Activated naive CD4-positive, alpha-beta T cell treated with anti-CD3 and anti-CD28 coated beads, Interleukin-2, amount 10 ng/mL, durations not matched to agents 7 days and 5 days (primary cell): ENCODE measurements at regions of chr9 and their contacts with region 1.

Region 1: DNA sequence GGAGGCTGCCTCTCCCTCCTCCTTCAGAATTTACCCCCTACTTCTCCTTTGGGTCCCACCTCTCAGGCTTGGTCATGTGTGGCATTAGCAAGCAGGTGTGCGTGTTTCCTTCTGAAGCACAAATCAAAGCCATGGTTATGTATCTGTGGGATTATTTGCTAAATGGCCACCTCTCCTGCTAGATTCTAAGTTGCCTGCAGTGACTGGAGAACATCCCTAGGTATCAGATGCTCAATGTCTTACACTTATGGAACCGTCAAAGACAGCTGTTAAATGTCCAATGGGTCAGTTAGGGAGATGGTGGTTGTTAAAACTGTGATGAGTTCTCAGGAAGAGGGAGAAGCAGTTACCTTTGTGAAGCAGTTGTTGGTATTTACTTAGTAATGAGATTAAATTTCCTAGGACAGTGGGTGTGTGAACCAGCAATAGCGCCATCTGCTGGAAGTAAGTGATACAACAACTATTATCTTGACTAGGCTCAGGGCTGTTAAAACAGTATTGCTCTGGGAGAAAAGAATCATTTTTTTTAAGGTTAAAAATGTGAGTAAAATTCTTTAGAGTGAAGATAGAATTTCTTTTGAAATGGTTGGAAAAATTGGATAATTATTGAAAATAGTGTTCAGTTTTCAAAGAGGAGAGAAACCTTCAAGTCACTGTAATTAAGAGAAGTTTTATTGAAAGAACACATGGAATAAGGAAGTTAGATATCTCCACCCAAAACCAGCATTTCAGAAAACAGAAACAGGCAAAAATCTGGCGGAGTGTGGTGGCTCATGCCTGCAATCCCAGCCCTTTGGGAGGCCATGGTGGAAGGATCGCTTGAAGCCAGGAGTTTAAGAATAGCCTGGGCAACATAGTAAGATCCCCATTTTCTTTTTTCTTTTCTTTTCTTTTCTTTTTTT is 71.3 kb downstream of the TMC1 start:
- DNase-seq: peak; percentile 24
- H3K4me3 Mint-ChIP-seq: no peak overlapping the region
- H3K27ac Mint-ChIP-seq: no peak overlapping the region
- H3K4me1 Mint-ChIP-seq: peaks cover 20% of the 10 kb centered on the region
- H3K27me3 Mint-ChIP-seq: peaks cover 18% of the 10 kb centered on the region

Region 2: GRCh38 chr9:72292256-72292682 is 300.5 kb before region 1 on chr9:
- CTCF ChIA-PET with region 1: interaction called, 13 read pairs
- DNase-seq: no peak
- H3K4me3 Mint-ChIP-seq: no peak overlapping the region
- H3K27ac Mint-ChIP-seq: no peak overlapping the region
- H3K4me1 Mint-ChIP-seq: peaks cover 3% of the 10 kb centered on the region
- H3K27me3 Mint-ChIP-seq: peaks cover 20% of the 10 kb centered on the region

Region 3: GRCh38 chr9:72363795-72364678 is 228.7 kb before region 1 on chr9:
- CTCF ChIA-PET with region 1: interaction called, 15 read pairs
- DNase-seq: peak; percentile 84
- H3K4me3 Mint-ChIP-seq: peak overlapping the region; percentile 86
- H3K27ac Mint-ChIP-seq: peak overlapping the region; percentile 96
- H3K4me1 Mint-ChIP-seq: peaks cover 48% of the 10 kb centered on the region
- H3K27me3 Mint-ChIP-seq: no peaks in the 10 kb centered on the region

Region 4: DNA sequence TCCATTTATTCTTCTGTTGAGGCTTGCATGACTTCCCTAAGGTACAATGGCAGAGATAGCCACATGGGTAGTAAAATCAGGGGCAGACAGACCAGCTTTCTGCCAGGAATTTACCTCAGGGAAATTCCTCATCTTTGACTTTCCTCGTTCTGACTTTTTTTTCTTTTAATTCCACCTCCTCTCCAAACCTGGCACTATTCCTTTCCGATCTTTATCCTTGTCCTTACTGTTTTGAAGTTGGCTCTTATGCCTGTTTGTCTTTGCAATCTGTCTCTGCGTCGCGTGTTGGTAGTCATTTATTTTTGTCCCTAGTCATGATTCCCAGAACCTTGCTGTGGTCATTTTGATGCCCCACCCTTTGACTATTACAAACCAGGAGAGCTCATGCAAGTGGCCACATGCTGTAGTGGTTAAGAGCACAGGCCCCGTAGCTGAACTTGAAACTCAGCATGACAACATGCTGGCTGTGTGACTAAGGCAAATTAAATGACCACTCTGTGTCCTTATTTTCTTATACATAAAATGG is 52.3 kb before region 1 on chr9:
- CTCF ChIA-PET with region 1: no interaction called
- DNase-seq: no peak
- H3K4me3 Mint-ChIP-seq: no peak overlapping the region
- H3K27ac Mint-ChIP-seq: peak overlapping the region; percentile 15
- H3K4me1 Mint-ChIP-seq: peaks cover 13% of the 10 kb centered on the region
- H3K27me3 Mint-ChIP-seq: no peaks in the 10 kb centered on the region

Region 5: DNA sequence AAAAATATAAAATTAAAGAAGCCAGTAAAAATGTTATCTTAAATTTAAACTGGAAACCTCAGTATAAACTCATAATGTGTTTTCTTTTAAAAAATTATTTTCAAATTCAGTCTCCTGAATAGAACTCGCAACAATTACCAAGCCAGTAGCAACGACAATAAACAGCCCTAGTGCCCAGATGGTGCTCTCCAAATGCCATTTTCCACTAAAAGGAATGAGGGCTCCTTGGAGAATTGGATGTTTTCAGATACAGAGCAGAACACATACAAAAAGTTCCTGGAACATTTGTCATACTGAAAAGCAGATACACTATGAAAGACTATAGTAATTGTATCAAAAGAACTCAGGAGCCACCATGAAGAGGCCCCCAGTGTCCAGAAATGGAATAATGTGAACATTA is 26.1 kb after region 1 on chr9:
- CTCF ChIA-PET with region 1: no interaction called
- DNase-seq: no peak
- H3K4me3 Mint-ChIP-seq: no peak overlapping the region
- H3K27ac Mint-ChIP-seq: no peak overlapping the region
- H3K4me1 Mint-ChIP-seq: no peaks in the 10 kb centered on the region
- H3K27me3 Mint-ChIP-seq: peaks cover 5% of the 10 kb centered on the region